CD4-positive, alpha-beta T cell (primary cell): ENCODE measurements at regions of chr10 and their contacts with region 1.

Region 1: GRCh38 chr10:87771871-87772500 is 46.0 kb downstream of the ATAD1 start:
- DNase-seq: peak in 3 of 14 experiments; percentile 25 to 27 (median 26)
- ATAC-seq: no peak
- H3K4me3 ChIP-seq: no peak overlapping the region
- H3K4me3 Mint-ChIP-seq: no peak overlapping the region
- H3K27ac ChIP-seq: no peak overlapping the region
- H3K27ac Mint-ChIP-seq: no peak overlapping the region
- H3K4me1 ChIP-seq: no peaks in the 10 kb centered on the region
- H3K4me1 Mint-ChIP-seq: no peaks in the 10 kb centered on the region
- H3K27me3 ChIP-seq: no peaks in the 10 kb centered on the region
- H3K27me3 Mint-ChIP-seq: no peaks in the 10 kb centered on the region
- CTCF ChIP-seq: peak; percentile 63

Region 2: GRCh38 chr10:87531908-87532622 is 239.9 kb before region 1 on chr10:
- CTCF ChIA-PET with region 1: no interaction called
- POLR2A ChIA-PET with region 1: no interaction called
- intact Hi-C with region 1: loop called (anchors 5 to 10 kb)
- DNase-seq: no peak
- ATAC-seq: no peak
- H3K4me3 ChIP-seq: no peak overlapping the region
- H3K4me3 Mint-ChIP-seq: no peak overlapping the region
- H3K27ac ChIP-seq: no peak overlapping the region
- H3K27ac Mint-ChIP-seq: no peak overlapping the region
- H3K4me1 ChIP-seq: no peaks in the 10 kb centered on the region
- H3K4me1 Mint-ChIP-seq: peaks cover 12% of the 10 kb centered on the region
- H3K27me3 ChIP-seq: no peaks in the 10 kb centered on the region
- H3K27me3 Mint-ChIP-seq: no peaks in the 10 kb centered on the region
- CTCF ChIP-seq: no peak

Region 3: DNA sequence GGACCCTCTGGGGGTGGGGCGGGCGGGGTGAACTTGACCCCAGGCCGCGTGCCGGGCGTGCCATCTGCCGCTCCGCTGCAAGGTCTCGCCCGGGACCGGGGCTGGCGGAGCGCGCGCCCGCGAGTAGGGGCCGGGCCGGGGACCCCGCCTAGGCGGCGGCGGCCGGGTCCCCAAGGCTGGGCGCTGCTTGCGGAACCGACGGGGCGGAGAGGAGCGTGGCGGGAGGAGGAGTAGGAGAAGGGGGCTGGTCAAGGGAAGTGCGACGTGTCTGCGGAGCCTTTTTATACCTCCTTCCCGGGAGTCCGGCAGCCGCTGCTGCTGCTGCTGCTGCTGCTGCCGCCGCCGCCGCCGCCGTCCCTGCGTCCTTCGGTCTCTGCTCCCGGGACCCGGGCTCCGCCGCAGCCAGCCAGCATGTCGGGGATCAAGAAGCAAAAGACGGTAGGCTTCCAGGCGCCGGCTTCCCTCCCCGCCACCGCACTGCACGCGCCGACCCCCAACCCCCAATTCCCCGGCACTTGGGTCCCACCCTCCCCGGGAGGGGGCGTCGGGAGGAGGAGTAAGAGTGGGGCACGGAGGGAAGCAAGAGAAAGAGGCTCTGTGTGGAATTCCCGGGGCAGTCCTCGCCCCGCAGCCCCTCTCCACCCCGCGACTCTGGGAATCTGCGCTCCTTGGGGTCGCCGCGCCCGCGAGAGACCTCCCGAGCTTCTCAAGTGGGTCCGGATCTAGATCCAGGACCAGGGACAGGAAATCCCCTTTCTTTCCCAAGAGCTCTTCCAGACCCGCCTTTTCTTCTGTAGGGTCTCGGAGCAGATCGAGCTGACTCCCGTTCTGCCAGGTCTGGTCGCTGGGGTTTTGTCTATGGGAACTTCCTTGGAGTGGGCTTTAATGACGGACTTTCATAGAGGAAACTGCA is 112.2 kb before region 1 on chr10 and contains the start of gene PAPSS2:
- CTCF ChIA-PET with region 1: no interaction called
- POLR2A ChIA-PET with region 1: no interaction called
- intact Hi-C with region 1: loop called (anchors 1 to 5 kb)
- DNase-seq: peak in 6 of 14 experiments; percentile 1 to 40 (median 8)
- ATAC-seq: no peak
- H3K4me3 ChIP-seq: peak within 1 kb of the TSS; percentile 50
- H3K4me3 Mint-ChIP-seq: peak within 1 kb of the TSS; percentile 88
- H3K27ac ChIP-seq: no peak within 1 kb of the TSS
- H3K27ac Mint-ChIP-seq: no peak within 1 kb of the TSS
- H3K4me1 ChIP-seq: peaks cover 12% of the 10 kb centered on the region
- H3K4me1 Mint-ChIP-seq: peaks cover 6% of the 10 kb centered on the region
- H3K27me3 ChIP-seq: peaks cover 19 to 48% of the 10 kb centered on the region in 2 experiments
- H3K27me3 Mint-ChIP-seq: peaks cover 61% of the 10 kb centered on the region
- CTCF ChIP-seq: no peak
- total RNA-seq, gene PAPSS2: not detected